Lower leg skin (tissue), 4 donors: ENCODE measurements at regions of chr11 and their contacts with region 1.

Region 1: GRCh38 chr11:63710476-63711217 is 29.3 kb downstream of the RTN3 start:
- DNase-seq: no peak
- H3K4me3 ChIP-seq: no peak overlapping the region
- CTCF ChIP-seq: no peak
- POLR2A ChIP-seq: no peak

Region 2: DNA sequence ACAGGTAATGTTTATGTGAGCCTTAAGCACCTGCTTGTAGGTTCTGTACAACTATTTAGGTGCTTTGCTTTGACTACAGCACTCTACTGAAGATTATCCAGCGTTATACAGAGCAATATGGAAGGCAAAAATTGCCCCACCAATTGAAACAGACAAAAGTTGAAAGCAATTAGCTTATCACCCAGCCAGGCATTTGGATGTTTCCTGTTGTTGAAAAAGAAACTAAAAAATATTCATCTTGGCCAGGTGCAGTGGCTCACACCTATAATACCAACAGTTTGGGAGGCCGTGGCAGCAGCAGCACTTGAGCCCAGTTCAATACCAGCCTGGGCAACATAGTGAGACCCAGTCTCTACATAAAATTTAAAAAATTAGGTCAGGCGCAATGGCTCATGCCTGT is 58.0 kb before region 1 on chr11:
- intact Hi-C with region 1: loop called (anchors 10 kb)
- DNase-seq: no peak
- H3K4me3 ChIP-seq: no peak overlapping the region
- CTCF ChIP-seq: no peak
- POLR2A ChIP-seq: no peak